Heart right ventricle (tissue), 16 donors: ENCODE measurements at regions of chr11 and their contacts with region 1.

Region 1: GRCh38 chr11:126257764-126258163 is 10.9 kb downstream of the SRPRA start:
- DNase-seq: no peak
- ATAC-seq: no peak
- H3K4me3 ChIP-seq: no peak overlapping the region
- H3K27ac ChIP-seq: no peak overlapping the region
- H3K4me1 ChIP-seq: peaks cover 0 to 9% (median 0%) of the 10 kb centered on the region in 9 donors
- H3K27me3 ChIP-seq: no peaks in the 10 kb centered on the region
- CTCF ChIP-seq: no peak

Region 2: GRCh38 chr11:125923012-125923579 is 334.7 kb before region 1 on chr11:
- intact Hi-C with region 1: loop called in 3 of 10 experiments (anchors 5 to 10 kb)
- DNase-seq: peak; percentile 24 to 68
- ATAC-seq: peak in 7 of 8 donors; percentile 76 to 87 (median 81)
- H3K4me3 ChIP-seq: no peak overlapping the region
- H3K27ac ChIP-seq: no peak overlapping the region
- H3K4me1 ChIP-seq: no peaks in the 10 kb centered on the region
- H3K27me3 ChIP-seq: peaks cover 0 to 17% (median 0%) of the 10 kb centered on the region in 7 donors
- CTCF ChIP-seq: peak; percentile 62 to 87 (median 79)

Region 3: GRCh38 chr11:126592496-126593410 is 335.0 kb after region 1 on chr11:
- intact Hi-C with region 1: no loop called
- DNase-seq: no peak
- ATAC-seq: no peak
- H3K4me3 ChIP-seq: no peak overlapping the region
- H3K27ac ChIP-seq: no peak overlapping the region
- H3K4me1 ChIP-seq: no peaks in the 10 kb centered on the region
- H3K27me3 ChIP-seq: peaks cover 0 to 49% (median 5%) of the 10 kb centered on the region in 7 donors
- CTCF ChIP-seq: no peak